CD14-positive monocyte (primary cell): ENCODE measurements at regions of chr11 and their contacts with region 1.

Region 1: DNA sequence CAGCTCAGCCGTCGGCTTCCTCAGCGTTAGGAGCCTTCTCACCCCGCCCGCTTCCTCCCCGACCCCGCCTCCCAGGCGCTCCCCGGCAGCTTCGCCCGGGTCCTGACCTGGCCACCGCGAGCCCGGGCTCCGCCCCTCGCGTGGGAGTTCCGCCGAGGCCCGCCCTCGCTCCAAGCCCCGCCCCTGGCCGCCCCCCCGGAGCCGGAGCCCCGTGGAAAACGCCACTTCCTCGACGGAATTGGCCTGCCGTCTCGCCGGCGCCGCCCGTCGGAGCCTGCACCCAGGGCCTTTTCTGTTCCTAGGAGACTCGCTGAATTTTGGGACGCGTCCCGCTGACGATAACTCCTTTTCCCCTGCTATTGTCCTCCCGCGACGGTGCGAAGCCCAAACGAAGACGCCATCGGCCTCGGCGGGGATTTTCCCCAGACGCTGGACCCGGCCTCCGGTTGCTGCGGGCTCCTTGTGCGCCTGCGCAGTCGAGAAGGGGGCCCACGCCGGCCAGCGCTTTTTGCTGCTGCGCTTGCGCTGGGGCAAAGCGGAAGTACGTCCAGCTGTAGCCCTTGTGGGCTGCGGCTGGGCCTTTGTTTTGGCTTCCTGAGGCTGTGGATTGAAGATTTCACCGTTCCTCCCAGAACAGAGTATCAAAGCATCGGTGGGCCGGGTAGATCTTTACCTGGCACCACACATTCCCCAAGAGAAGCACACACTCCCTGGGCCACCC is 10.0 kb downstream of the RELA start:
- DNase-seq: peak; percentile 95 to 96 (median 95)
- H3K4me3 ChIP-seq: peak overlapping the region; percentile 18 to 70 (median 56)
- H3K4me3 Mint-ChIP-seq: peak overlapping the region; percentile 86 to 90
- H3K27ac ChIP-seq: peak overlapping the region; percentile 83 to 97
- H3K27ac Mint-ChIP-seq: peak overlapping the region; percentile 96 to 99 (median 98)
- H3K4me1 ChIP-seq: peaks cover 38 to 52% of the 10 kb centered on the region in 2 donors
- H3K4me1 Mint-ChIP-seq: peaks cover 43% of the 10 kb centered on the region
- H3K27me3 ChIP-seq: no peaks in the 10 kb centered on the region
- H3K27me3 Mint-ChIP-seq: peaks cover 0 to 1% (median 0%) of the 10 kb centered on the region in 3 donors
- CTCF ChIP-seq: no peak

Region 2: DNA sequence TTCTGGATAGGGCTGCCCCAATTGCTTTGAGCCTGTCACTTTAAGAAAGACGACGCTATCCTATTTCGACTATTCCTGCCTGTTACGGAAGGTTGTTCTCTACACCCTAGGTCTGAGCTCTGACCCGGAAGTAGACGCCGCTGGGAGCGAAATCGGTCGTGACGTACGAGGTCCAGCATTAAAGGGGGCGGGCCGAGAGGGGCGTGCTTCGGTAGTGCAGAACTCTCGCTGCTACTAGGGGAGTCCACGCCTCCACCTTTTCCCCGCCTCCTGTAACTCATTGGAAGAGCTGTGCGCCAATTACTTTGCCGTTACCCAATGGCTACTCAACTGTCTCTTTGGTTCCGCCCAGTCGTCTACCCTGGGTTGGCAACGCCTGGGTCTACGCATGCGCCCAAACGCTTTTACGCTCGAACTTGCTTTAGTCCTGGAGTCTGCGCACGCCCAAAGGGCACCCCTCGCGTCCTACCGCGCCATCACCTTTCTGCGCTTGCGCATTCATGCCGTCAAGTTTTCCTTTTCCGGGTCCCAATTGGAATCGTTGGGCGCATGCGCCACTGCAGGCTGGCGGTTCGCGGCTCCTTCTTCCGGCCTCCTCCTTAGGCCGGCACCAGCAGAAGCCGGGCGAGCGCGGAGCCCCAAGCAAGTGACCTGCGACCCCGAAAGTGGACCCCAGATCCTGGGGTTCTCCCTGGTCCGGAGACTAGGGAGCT is 37.3 kb before region 1 on chr11 and contains the start of gene PCNX3:
- intact Hi-C with region 1: loop called (anchors 2 to 5 kb)
- DNase-seq: peak; percentile 100
- H3K4me3 ChIP-seq: peak within 1 kb of the TSS; percentile 79 to 96 (median 93)
- H3K4me3 Mint-ChIP-seq: peak within 1 kb of the TSS; percentile 89 to 96
- H3K27ac ChIP-seq: peak within 1 kb of the TSS; percentile 94 to 96
- H3K27ac Mint-ChIP-seq: peak within 1 kb of the TSS; percentile 96 to 99 (median 98)
- H3K4me1 ChIP-seq: peaks cover 40 to 54% of the 10 kb centered on the region in 2 donors
- H3K4me1 Mint-ChIP-seq: peaks cover 39% of the 10 kb centered on the region
- H3K27me3 ChIP-seq: no peaks in the 10 kb centered on the region
- H3K27me3 Mint-ChIP-seq: no peaks in the 10 kb centered on the region
- CTCF ChIP-seq: no peak
- polyA plus RNA-seq, gene PCNX3: 0.58 to 36.4 (median 1.7) TPM

Region 3: DNA sequence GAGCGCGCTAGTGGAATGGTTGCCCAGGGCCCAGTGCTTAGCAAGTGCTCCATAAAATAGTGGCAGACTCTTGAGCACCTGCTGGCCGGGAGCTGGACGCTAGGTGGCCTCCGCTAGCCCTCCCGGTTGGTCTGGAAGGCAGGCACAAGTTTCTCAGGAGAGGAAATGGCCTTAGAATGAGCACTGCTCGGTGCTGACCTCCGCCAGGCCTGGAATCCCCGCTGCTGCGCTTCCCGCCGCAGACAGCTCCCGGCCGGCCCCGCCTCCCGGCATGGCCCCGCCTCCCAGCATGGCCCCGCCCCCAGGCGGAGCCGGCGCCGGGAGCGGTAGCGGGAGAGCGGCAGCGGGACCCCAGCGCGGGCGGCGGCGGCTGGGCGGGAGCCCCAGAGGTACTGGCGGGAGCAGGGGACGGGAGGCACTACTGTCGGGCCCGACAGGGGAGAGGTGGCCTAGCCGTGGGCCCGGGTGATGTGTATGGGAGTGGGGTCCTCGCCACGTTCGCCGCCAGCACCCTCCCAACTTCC is 14.8 kb before region 1 on chr11 and contains the start of gene SIPA1:
- intact Hi-C with region 1: loop called (anchors 1 kb)
- DNase-seq: peak; percentile 52 to 88 (median 65)
- H3K4me3 ChIP-seq: peak within 1 kb of the TSS; percentile 72 to 99 (median 72)
- H3K4me3 Mint-ChIP-seq: peak within 1 kb of the TSS; percentile 94 to 95
- H3K27ac ChIP-seq: peak within 1 kb of the TSS; percentile 77 to 79
- H3K27ac Mint-ChIP-seq: peak within 1 kb of the TSS; percentile 86 to 92 (median 91)
- H3K4me1 ChIP-seq: peaks cover 44 to 58% of the 10 kb centered on the region in 2 donors
- H3K4me1 Mint-ChIP-seq: peaks cover 49% of the 10 kb centered on the region
- H3K27me3 ChIP-seq: no peaks in the 10 kb centered on the region
- H3K27me3 Mint-ChIP-seq: peaks cover 0 to 1% (median 0%) of the 10 kb centered on the region in 3 donors
- CTCF ChIP-seq: no peak
- polyA plus RNA-seq, gene SIPA1: 83.4 to 110 (median 86.5) TPM

Region 4: DNA sequence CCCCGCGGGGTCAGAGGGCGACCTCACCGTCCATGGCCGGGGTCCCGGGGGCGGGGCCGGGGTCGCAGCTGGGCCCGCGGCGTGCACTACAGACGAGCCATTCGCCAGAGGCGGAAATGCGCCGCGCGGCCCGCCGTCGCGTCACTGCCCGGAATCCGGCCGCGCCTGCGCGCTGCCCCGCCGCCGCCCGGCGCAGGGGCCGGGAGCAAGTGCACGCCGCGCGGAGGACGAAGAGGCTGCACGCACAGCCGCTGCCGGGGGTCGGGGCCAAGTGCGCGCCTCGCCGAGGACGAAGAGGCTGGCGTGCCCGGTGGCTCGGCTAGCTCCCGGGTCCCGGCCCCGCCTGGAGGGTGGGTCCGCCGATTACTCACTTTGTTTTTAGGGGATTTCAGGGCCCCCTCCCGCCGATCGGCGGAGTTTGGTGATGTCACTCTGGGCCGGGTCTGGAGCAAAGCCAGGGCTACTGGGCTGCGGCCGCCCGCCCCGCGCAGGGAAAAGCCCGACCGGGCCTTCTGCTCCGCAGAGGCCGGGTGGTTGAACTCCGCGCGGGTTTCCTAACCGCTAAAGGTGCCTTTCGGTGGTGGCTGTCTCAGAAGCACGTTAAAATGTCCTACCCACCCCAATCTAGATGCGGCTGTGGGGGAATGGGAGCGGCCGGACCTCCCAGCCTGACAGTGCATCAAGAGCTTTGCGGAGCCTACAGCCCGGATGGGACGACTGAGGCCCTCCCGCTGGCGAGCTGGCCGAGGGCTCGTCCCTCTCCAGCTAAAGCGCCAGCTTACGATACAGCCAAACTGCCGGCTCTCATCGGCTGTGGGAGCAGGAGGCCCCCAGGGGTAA is 10.3 kb after region 1 on chr11 and contains the start of gene RELA:
- intact Hi-C with region 1: loop called in 1 of 2 experiments (anchors 1 kb)
- DNase-seq: peak; percentile 87 to 96 (median 89)
- H3K4me3 ChIP-seq: peak within 1 kb of the TSS; percentile 85 to 90 (median 85)
- H3K4me3 Mint-ChIP-seq: peak within 1 kb of the TSS; percentile 86 to 91
- H3K27ac ChIP-seq: peak within 1 kb of the TSS; percentile 95 to 99
- H3K27ac Mint-ChIP-seq: peak within 1 kb of the TSS; percentile 90 to 98 (median 97)
- H3K4me1 ChIP-seq: peaks cover 26 to 27% of the 10 kb centered on the region in 2 donors
- H3K4me1 Mint-ChIP-seq: peaks cover 21% of the 10 kb centered on the region
- H3K27me3 ChIP-seq: no peaks in the 10 kb centered on the region
- H3K27me3 Mint-ChIP-seq: peaks cover 0 to 2% (median 0%) of the 10 kb centered on the region in 3 donors
- CTCF ChIP-seq: no peak
- polyA plus RNA-seq, gene RELA: 21.3 to 67.9 (median 30.9) TPM